ENCODE measurements at regions of chr6 and their contacts with region 1.

Region 1: DNA sequence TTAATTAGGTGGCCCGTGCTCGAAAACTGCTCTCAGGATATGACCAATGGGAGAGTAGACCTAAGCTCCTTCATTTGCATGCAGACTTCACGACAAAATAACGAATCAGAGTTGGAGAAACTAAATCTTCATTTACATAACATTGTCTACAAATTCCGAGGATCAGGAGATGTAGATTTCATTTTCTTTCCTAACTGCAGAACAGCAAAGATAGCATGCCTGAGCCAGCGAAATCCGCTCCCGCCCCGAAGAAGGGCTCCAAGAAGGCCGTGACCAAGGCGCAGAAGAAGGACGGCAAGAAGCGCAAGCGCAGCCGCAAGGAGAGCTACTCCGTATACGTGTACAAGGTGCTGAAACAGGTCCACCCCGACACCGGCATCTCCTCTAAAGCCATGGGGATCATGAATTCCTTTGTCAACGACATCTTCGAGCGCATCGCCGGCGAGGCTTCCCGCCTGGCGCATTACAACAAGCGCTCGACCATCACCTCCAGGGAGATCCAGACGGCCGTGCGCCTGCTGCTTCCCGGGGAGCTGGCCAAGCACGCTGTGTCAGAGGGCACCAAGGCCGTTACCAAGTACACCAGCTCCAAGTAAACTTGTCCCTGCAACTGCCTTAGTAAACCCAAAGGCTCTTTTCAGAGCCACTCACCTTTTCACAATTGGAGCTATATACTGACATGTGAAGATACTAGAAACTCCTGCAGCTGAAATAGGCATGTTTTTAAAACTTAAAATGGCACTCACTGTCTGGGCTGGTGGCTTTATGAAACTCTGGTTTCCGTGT is 96.5 kb downstream of the HFE start:
- DNase-seq: peak; percentile 74
- ATAC-seq: peak; percentile 78
- H3K4me3 Mint-ChIP-seq: peak overlapping the region; percentile 90
- H3K27ac Mint-ChIP-seq: peak overlapping the region; percentile 99
- H3K4me1 Mint-ChIP-seq: peaks cover 45% of the 10 kb centered on the region
- H3K27me3 Mint-ChIP-seq: no peaks in the 10 kb centered on the region
- CTCF ChIP-seq: no peak

Region 2: DNA sequence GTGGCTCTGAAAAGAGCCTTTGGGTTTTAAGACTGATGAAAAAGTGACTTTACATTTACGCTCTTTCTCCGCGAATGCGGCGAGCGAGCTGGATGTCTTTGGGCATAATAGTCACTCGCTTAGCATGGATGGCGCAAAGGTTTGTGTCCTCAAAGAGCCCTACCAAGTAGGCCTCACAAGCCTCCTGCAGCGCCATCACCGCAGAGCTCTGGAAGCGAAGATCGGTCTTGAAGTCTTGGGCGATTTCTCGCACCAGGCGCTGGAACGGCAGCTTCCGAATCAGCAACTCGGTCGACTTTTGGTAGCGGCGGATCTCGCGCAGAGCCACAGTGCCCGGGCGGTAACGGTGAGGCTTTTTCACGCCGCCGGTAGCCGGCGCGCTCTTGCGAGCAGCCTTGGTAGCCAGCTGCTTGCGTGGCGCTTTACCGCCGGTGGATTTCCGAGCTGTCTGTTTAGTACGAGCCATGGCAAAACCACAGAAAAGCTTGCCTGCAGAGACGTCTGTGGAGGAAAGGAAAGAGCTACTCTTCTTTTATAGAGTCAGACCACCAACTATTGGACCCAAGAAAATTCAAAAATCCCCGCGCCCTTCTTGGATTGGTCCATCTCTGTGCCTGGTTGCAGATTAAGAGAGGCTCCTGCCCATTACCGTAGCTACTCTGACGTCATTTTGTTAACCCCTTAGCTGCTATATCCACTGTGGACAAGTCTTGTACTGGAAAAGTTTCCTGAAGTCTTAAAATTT is 152.0 kb before region 1 on chr6:
- CTCF ChIA-PET with region 1: no interaction called
- POLR2A ChIA-PET with region 1: interaction called, 35 read pairs
- DNase-seq: peak; percentile 80
- ATAC-seq: peak; percentile 67
- H3K4me3 Mint-ChIP-seq: peak overlapping the region; percentile 91
- H3K27ac Mint-ChIP-seq: peak overlapping the region; percentile 100
- H3K4me1 Mint-ChIP-seq: peaks cover 59% of the 10 kb centered on the region
- H3K27me3 Mint-ChIP-seq: no peaks in the 10 kb centered on the region
- CTCF ChIP-seq: no peak

Region 3: GRCh38 chr6:26204332-26205165 is 20.8 kb after region 1 on chr6:
- CTCF ChIA-PET with region 1: no interaction called
- POLR2A ChIA-PET with region 1: interaction called, 471 read pairs
- DNase-seq: peak; percentile 90
- ATAC-seq: peak; percentile 58
- H3K4me3 Mint-ChIP-seq: no peak overlapping the region
- H3K27ac Mint-ChIP-seq: no peak overlapping the region
- H3K4me1 Mint-ChIP-seq: peaks cover 22% of the 10 kb centered on the region
- H3K27me3 Mint-ChIP-seq: no peaks in the 10 kb centered on the region
- CTCF ChIP-seq: no peak

Region 4: DNA sequence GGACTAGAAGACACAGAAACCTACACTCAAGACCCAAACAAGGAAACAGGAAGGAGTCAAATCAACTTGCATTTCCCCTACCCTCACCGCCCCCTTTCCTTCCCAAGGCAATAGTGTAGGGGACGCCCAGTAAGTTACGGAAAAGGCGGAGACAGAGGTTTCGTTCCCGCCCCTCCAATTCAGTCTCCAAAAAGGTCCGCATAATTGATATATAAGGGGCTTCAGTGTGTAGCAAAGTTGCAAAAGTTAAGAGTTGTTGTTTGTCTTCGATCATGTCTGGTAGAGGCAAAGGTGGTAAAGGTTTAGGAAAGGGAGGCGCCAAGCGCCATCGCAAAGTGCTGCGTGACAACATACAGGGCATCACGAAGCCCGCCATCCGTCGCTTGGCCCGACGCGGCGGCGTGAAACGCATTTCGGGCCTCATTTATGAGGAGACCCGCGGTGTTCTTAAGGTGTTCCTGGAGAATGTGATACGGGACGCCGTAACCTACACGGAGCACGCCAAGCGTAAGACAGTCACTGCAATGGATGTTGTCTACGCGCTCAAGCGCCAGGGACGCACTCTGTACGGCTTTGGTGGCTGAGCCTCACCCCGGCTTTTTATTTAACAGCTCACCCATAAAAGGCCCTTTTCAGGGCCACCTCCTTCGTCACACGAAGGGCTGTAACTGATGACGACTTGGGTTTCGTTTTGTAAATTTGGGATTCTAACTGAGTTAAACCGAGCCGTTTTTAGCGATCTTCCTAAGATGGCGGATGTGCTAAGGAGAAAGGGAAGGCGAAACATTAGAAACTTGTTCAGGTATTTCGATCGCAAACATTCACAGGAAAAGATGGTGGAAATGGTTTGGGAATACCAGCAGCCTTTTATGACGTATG is 56.6 kb after region 1 on chr6:
- CTCF ChIA-PET with region 1: no interaction called
- POLR2A ChIA-PET with region 1: interaction called, 35 read pairs
- DNase-seq: peak; percentile 81
- ATAC-seq: peak; percentile 84
- H3K4me3 Mint-ChIP-seq: peak overlapping the region; percentile 75
- H3K27ac Mint-ChIP-seq: peak overlapping the region; percentile 98
- H3K4me1 Mint-ChIP-seq: peaks cover 48% of the 10 kb centered on the region
- H3K27me3 Mint-ChIP-seq: no peaks in the 10 kb centered on the region; the same call in 1 of the 2 replicates
- CTCF ChIP-seq: no peak

Region 5: GRCh38 chr6:26285143-26286134 is 101.7 kb after region 1 on chr6:
- CTCF ChIA-PET with region 1: no interaction called
- POLR2A ChIA-PET with region 1: interaction called, 15 read pairs
- DNase-seq: peak; percentile 96
- ATAC-seq: peak; percentile 73
- H3K4me3 Mint-ChIP-seq: peak overlapping the region; percentile 97
- H3K27ac Mint-ChIP-seq: peak overlapping the region; percentile 100
- H3K4me1 Mint-ChIP-seq: peaks cover 16% of the 10 kb centered on the region
- H3K27me3 Mint-ChIP-seq: peaks cover 4% of the 10 kb centered on the region
- CTCF ChIP-seq: no peak

Region 6: GRCh38 chr6:27838058-27838944 is 1654.5 kb after region 1 on chr6:
- CTCF ChIA-PET with region 1: no interaction called
- POLR2A ChIA-PET with region 1: interaction called, 10 read pairs
- DNase-seq: peak; percentile 84
- ATAC-seq: peak; percentile 84
- H3K4me3 Mint-ChIP-seq: no peak overlapping the region
- H3K27ac Mint-ChIP-seq: no peak overlapping the region
- H3K4me1 Mint-ChIP-seq: peaks cover 28% of the 10 kb centered on the region
- H3K27me3 Mint-ChIP-seq: no peaks in the 10 kb centered on the region
- CTCF ChIP-seq: no peak